PC-3 (cell line): ENCODE measurements at regions of chr4 and their contacts with region 1.

Region 1: GRCh38 chr4:15882675-15883086 is 55.9 kb downstream of the FGFBP1 start:
- DNase-seq: peak; percentile 82
- ATAC-seq: peak; percentile 92
- H3K4me3 ChIP-seq: no peak overlapping the region
- H3K27ac ChIP-seq: peak overlapping the region; percentile 46
- H3K4me1 ChIP-seq: peaks cover 13% of the 10 kb centered on the region; the same call in 1 of the 2 replicates
- H3K27me3 ChIP-seq: no peaks in the 10 kb centered on the region
- CTCF ChIP-seq: peak; percentile 88

Region 2: GRCh38 chr4:15479089-15479912 is 403.4 kb before region 1 on chr4:
- CTCF ChIA-PET with region 1: no interaction called
- POLR2A ChIA-PET with region 1: no interaction called
- intact Hi-C with region 1: loop called (anchors 5 kb)
- DNase-seq: peak; percentile 81
- ATAC-seq: peak; percentile 83
- H3K4me3 ChIP-seq: peak overlapping the region; percentile 75
- H3K27ac ChIP-seq: peak overlapping the region; percentile 76
- H3K4me1 ChIP-seq: peaks cover 8% of the 10 kb centered on the region; the same call in 1 of the 2 replicates
- H3K27me3 ChIP-seq: no peaks in the 10 kb centered on the region
- CTCF ChIP-seq: peak; percentile 75

Region 3: GRCh38 chr4:15729910-15730533 is 152.7 kb before region 1 on chr4:
- CTCF ChIA-PET with region 1: no interaction called
- POLR2A ChIA-PET with region 1: no interaction called
- intact Hi-C with region 1: no loop called
- DNase-seq: peak; percentile 63
- ATAC-seq: peak; percentile 62
- H3K4me3 ChIP-seq: no peak overlapping the region
- H3K27ac ChIP-seq: no peak overlapping the region
- H3K4me1 ChIP-seq: no peaks in the 10 kb centered on the region
- H3K27me3 ChIP-seq: no peaks in the 10 kb centered on the region
- CTCF ChIP-seq: peak; percentile 68

Region 4: DNA sequence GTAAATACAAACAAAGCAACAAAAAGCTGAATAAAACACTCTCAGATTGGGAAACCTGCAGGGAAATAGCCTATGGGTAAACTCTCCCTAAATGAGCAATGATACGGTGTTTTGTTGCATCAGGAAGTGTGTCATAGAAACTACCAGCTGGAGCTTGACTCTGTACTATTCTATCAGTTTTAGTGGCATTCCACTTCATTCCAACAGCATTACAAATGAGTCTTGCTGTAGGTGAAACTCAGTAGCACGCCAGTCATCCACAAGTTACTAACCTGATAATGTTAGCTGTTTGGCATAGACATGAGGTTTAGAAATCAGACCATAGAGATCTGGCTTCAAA is 30.9 kb after region 1 on chr4:
- CTCF ChIA-PET with region 1: interaction called, 11 read pairs
- POLR2A ChIA-PET with region 1: interaction called, 3 read pairs
- intact Hi-C with region 1: no loop called
- DNase-seq: peak; percentile 94
- ATAC-seq: peak; percentile 93
- H3K4me3 ChIP-seq: no peak overlapping the region
- H3K27ac ChIP-seq: peak overlapping the region; percentile 99
- H3K4me1 ChIP-seq: peaks cover 49% of the 10 kb centered on the region
- H3K27me3 ChIP-seq: no peaks in the 10 kb centered on the region
- CTCF ChIP-seq: no peak

Region 5: GRCh38 chr4:15938182-15938581 is 55.5 kb after region 1 on chr4:
- CTCF ChIA-PET with region 1: interaction called, 8 read pairs
- POLR2A ChIA-PET with region 1: interaction called, 3 read pairs
- intact Hi-C with region 1: loop called (anchors 5 kb)
- DNase-seq: peak; percentile 88
- ATAC-seq: peak; percentile 91
- H3K4me3 ChIP-seq: peak overlapping the region; percentile 71
- H3K27ac ChIP-seq: peak overlapping the region; percentile 72
- H3K4me1 ChIP-seq: peaks cover 37% of the 10 kb centered on the region
- H3K27me3 ChIP-seq: no peaks in the 10 kb centered on the region
- CTCF ChIP-seq: no peak

Region 6: GRCh38 chr4:16001484-16001858 is 118.8 kb after region 1 on chr4:
- CTCF ChIA-PET with region 1: interaction called, 3 read pairs
- POLR2A ChIA-PET with region 1: no interaction called
- intact Hi-C with region 1: loop called (anchors 1 kb)
- DNase-seq: peak; percentile 75
- ATAC-seq: peak; percentile 95
- H3K4me3 ChIP-seq: no peak overlapping the region
- H3K27ac ChIP-seq: no peak overlapping the region
- H3K4me1 ChIP-seq: no peaks in the 10 kb centered on the region
- H3K27me3 ChIP-seq: no peaks in the 10 kb centered on the region
- CTCF ChIP-seq: peak; percentile 83